Mammary epithelial cell (primary cell): ENCODE measurements at regions of chrX and their contacts with region 1.

Region 1: DNA sequence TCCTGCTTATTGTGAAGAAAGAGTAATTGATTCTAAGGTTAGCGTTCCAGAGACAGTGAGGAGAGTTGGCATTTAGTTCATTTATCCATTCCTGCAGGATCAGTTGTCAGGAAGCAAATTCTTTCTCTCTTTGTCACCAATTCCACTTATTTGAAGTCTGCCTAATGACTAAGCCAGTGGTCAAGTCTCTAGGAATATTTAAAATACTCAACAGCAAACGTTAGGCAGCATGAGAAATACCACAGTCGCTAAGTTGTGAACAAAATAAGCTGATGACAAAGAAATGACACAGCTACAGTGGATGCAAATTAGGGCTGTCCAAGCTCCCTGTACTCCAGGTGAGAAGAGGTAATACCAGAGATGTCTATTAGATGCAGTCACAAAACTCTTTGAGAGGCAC is 6.6 kb upstream of the MAGEB17 start:
- DNase-seq: peak; percentile 85
- H3K4me3 ChIP-seq: no peak overlapping the region
- H3K27ac ChIP-seq: peak overlapping the region; percentile 21
- H3K4me1 ChIP-seq: peaks cover 17% of the 10 kb centered on the region
- H3K27me3 ChIP-seq: no peaks in the 10 kb centered on the region
- CTCF ChIP-seq: no peak

Region 2: DNA sequence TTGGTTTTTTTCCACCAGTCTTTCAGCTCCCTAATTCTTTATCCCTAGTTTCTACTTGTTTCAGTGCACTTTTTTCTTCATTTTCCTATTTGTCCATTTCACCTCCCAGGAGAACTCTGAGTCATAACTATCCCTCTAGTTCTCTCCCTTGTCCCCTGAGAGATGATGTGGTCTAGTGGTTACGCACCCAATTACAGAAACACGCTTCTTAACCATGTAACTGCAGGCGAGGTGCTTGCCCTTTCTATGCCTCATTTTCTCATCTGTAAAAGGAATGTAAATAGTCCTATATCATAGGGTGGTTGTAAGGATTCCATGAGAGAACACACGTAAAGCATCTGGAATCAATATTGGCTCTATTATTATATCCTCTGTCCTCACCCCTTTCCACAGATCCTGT is 46.1 kb before region 1 on chrX:
- CTCF ChIA-PET with region 1: no interaction called
- dilution Hi-C with region 1: no loop called
- in situ Hi-C with region 1: no loop called
- intact Hi-C with region 1: no loop called
- DNase-seq: no peak
- H3K4me3 ChIP-seq: no peak overlapping the region
- H3K27ac ChIP-seq: no peak overlapping the region
- H3K4me1 ChIP-seq: no peaks in the 10 kb centered on the region
- H3K27me3 ChIP-seq: peaks cover 4% of the 10 kb centered on the region
- CTCF ChIP-seq: no peak

Region 3: GRCh38 chrX:16212436-16212835 is 51.7 kb after region 1 on chrX:
- CTCF ChIA-PET with region 1: no interaction called
- dilution Hi-C with region 1: no loop called
- in situ Hi-C with region 1: no loop called
- intact Hi-C with region 1: loop called (anchors 2 kb)
- DNase-seq: no peak
- H3K4me3 ChIP-seq: no peak overlapping the region
- H3K27ac ChIP-seq: no peak overlapping the region
- H3K4me1 ChIP-seq: peaks cover 7% of the 10 kb centered on the region
- H3K27me3 ChIP-seq: no peaks in the 10 kb centered on the region
- CTCF ChIP-seq: peak; percentile 26 to 31

Region 4: DNA sequence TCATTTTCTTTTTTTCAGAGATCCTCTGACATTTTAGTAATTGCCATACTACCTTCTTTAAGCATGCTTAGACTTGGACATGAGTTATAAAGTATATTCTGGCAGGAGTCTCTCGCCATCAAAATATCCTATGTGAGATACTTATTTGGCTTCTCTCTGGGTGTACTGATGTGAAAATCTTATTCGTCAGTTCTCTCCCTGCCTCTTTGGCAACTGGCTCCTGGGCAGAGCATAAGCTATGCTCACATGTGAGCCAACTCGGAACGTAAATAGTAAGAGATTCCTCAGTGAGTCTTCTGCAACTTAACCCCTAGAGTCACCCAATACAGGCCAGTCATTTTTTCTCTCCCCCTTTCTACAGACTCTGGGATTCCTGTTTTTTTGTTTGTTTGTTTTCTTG is 98.2 kb after region 1 on chrX:
- CTCF ChIA-PET with region 1: no interaction called
- dilution Hi-C with region 1: no loop called
- in situ Hi-C with region 1: no loop called
- intact Hi-C with region 1: no loop called
- DNase-seq: no peak
- H3K4me3 ChIP-seq: no peak overlapping the region
- H3K27ac ChIP-seq: no peak overlapping the region
- H3K4me1 ChIP-seq: no peaks in the 10 kb centered on the region
- H3K27me3 ChIP-seq: peaks cover 9% of the 10 kb centered on the region
- CTCF ChIP-seq: no peak